ENCODE measurements at regions of chr18 and their contacts with region 1.

Region 1: GRCh38 chr18:10560450-10561045 is 34.7 kb downstream of the NAPG start:
- DNase-seq: peak; percentile 72 to 87 (median 76)
- ATAC-seq: peak; percentile 75 to 80
- H3K4me3 ChIP-seq: peak overlapping the region; percentile 1
- H3K27ac ChIP-seq: no peak overlapping the region
- H3K4me1 ChIP-seq: peaks cover 4% of the 10 kb centered on the region
- H3K27me3 ChIP-seq: no peaks in the 10 kb centered on the region

Region 2: GRCh38 chr18:11149441-11150270 is 589.1 kb after region 1 on chr18 and contains the start of gene PIEZO2:
- intact Hi-C with region 1: loop called in 2 of 4 experiments (anchors 5 to 10 kb)
- DNase-seq: peak; percentile 65 to 87 (median 86)
- ATAC-seq: peak; percentile 85 to 88
- H3K4me3 ChIP-seq: peak within 1 kb of the TSS; percentile 43
- H3K27ac ChIP-seq: no peak within 1 kb of the TSS
- H3K4me1 ChIP-seq: no peaks in the 10 kb centered on the region
- H3K27me3 ChIP-seq: no peaks in the 10 kb centered on the region
- total RNA-seq, gene PIEZO2: 0.54 to 0.93 (median 0.65) TPM

Measured in right cardiac atrium (tissue), 5 donors.